Activated B cell treated with CpG ODN at 0.5 μM for 24 hours (primary cell): ENCODE measurements at regions of chr11 and their contacts with region 1.

Region 1: GRCh38 chr11:5547982-5548381 is 358 bp downstream of the OR52H1 start:
- DNase-seq: no peak
- ATAC-seq: no peak
- H3K4me3 Mint-ChIP-seq: no peak overlapping the region
- H3K27ac Mint-ChIP-seq: no peak overlapping the region
- H3K4me1 Mint-ChIP-seq: no peaks in the 10 kb centered on the region
- H3K27me3 Mint-ChIP-seq: no peaks in the 10 kb centered on the region
- CTCF ChIP-seq: no peak

Region 2: GRCh38 chr11:5137014-5137413 is 411.0 kb before region 1 on chr11:
- CTCF ChIA-PET with region 1: no interaction called
- POLR2A ChIA-PET with region 1: no interaction called
- intact Hi-C with region 1: loop called (anchors 5 kb)
- DNase-seq: no peak
- ATAC-seq: no peak
- H3K4me3 Mint-ChIP-seq: no peak overlapping the region
- H3K27ac Mint-ChIP-seq: no peak overlapping the region
- H3K4me1 Mint-ChIP-seq: no peaks in the 10 kb centered on the region
- H3K27me3 Mint-ChIP-seq: no peaks in the 10 kb centered on the region
- CTCF ChIP-seq: no peak

Region 3: DNA sequence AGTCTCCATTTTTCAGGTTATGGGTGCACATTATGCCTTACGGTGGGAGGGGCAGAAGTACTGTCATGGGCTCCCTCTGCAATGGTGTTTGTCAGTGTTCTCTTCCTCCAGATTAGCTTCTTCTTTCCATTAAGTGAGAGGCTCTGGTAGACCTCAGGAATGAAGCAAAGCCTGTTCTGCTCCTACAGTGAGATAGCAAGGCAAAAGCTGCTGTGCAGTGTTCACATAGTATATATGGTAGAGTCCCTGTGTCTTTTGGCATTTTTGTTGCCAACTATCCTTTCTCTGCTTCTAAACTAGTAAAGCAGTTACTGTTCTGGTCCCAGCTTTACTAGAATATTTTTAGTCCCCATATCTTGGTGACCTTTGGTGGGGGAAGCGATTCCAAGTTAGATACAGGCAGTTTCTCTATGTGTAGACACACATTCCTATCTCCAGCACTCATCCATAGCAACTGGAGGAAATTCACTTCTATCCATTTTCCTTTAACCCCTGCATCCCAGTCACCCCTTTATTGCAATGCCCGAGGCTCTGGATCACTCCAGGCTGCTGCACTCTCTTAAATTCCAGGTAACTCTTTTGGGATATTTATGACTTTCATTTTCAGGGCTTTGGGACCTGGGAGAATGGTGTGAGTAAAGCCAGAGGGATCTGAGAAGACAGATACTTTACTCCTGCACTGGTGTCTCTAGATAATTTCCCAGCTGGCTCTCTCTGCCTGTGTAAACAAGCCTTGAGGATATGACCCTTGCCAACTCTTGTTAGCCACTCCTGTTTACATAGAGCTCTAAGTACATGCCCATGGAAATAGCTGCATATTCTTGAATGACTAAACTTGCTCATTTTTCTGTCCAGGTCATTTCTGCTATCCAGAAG is 72.9 kb after region 1 on chr11:
- CTCF ChIA-PET with region 1: no interaction called
- POLR2A ChIA-PET with region 1: no interaction called
- intact Hi-C with region 1: no loop called
- DNase-seq: no peak
- ATAC-seq: no peak
- H3K4me3 Mint-ChIP-seq: no peak overlapping the region
- H3K27ac Mint-ChIP-seq: no peak overlapping the region
- H3K4me1 Mint-ChIP-seq: peaks cover 20% of the 10 kb centered on the region
- H3K27me3 Mint-ChIP-seq: no peaks in the 10 kb centered on the region
- CTCF ChIP-seq: no peak